ENCODE measurements at regions of chr1 and their contacts with region 1.

Region 1: DNA sequence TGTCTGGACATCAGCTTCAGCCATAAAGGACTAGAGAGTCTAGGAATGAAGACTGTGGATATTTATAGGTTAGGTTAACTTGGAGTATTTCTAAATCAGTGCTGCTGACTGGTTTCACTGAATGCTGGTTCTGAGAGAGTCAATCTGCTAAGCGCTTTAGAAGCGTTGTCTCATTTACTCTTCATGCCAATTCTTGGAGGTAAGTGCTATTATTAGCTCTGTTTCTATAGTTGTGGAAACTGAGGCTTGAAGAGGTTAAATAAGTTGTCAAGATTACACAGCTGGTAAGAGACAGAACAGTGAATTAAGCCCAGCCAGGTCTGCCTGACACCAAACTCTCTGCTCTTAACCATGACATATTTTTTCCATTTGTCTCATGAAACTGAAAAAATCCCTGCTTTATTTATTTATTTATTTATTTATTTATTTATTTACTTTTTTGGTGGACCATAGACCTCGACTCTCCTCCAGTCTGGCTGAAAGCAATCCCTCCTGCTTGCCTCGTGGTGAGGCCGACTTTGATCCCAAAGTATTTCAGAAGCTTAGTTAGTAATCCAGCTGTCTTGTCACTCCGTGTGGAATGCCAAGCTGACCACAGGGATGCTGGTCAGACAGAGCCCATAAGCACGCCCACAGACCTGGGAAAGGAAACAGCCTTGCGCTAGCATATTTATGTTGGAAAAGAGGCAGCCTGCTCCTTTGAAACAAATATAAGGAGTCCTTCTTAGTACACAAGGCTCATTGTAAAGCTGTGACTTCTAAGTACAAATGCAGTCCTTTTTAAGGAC is 16.9 kb downstream of the NTMT2 start:
- DNase-seq: peak; percentile 2
- H3K4me3 ChIP-seq: no peak overlapping the region
- H3K27ac ChIP-seq: no peak overlapping the region
- H3K4me1 ChIP-seq: no peaks in the 10 kb centered on the region
- H3K27me3 ChIP-seq: no peaks in the 10 kb centered on the region
- CTCF ChIP-seq: no peak
- POLR2A ChIP-seq: no peak

Region 2: DNA sequence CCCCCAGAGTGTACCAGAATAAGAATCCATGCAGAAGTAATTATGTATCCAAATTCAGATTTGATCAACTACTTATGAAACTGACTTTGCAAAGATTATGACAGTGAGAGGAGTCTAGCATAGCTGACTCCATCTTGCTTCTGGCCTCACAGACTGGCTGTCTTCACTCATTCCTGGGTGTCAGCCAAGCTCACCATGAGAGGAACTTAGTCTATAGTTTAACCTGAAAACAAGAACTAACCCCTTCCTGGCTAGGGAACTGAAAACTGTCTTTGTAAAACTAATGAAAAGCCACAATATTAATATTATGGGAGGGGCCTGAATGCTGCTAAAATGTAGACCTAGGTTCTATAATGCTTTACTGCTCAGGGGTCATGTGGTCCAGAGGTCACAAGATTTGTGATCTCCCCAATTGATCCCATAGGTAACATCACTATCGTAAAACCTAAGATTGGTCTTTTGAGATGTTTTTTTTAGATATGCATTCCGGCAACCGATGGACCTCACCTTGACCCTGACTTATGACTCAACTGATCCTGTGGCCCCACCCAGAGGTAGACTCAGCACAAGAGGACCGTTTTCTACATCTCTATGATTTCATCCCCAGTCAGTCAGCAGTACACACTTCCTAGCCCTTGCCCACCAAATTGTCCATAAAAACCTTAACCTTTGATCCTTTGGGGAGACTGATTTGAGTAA is 1001.0 kb before region 1 on chr1:
- CTCF ChIA-PET with region 1: no interaction called
- POLR2A ChIA-PET with region 1: interaction called, 10 read pairs
- dilution Hi-C with region 1: no loop called
- intact Hi-C with region 1: no loop called
- DNase-seq: no peak
- H3K4me3 ChIP-seq: no peak overlapping the region
- H3K27ac ChIP-seq: no peak overlapping the region
- H3K4me1 ChIP-seq: no peaks in the 10 kb centered on the region
- H3K27me3 ChIP-seq: no peaks in the 10 kb centered on the region
- CTCF ChIP-seq: no peak
- POLR2A ChIP-seq: no peak